ENCODE measurements at regions of chr12 and their contacts with region 1.

Region 1: DNA sequence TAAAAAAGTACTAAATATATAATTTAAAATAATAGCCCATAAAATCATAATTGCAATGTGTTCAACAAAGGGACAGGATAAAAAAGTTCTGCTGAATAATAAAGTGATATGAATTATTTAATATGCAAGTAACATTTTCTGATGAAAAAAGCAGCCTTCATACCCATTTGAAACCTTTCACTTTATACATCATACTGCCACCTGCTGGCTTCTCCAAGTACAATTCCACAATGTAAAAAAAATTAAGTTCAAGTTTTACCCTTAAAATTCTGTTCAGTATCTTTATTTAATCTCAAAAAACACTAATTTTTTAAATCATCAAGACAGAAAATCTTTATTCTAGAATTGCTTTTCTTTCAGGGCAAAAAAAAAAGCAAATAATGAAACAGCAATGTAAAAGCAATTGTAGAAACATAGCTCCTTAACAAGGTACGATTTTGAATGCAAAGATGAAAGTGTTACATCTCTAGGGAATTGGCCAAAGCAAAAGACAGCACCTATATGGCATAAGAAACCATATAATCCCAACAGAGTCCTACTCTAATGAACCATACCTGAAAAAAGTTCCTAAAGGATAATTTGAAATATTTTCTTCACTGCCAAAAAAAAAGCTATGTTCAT is 15.0 kb downstream of the MDM1 start:
- DNase-seq: peak; percentile 58
- ATAC-seq: no peak
- H3K4me3 Mint-ChIP-seq: no peak overlapping the region
- H3K27ac Mint-ChIP-seq: no peak overlapping the region
- H3K4me1 Mint-ChIP-seq: no peaks in the 10 kb centered on the region
- H3K27me3 Mint-ChIP-seq: no peaks in the 10 kb centered on the region

Region 2: GRCh38 chr12:68236421-68237059 is 80.6 kb before region 1 on chr12:
- CTCF ChIA-PET with region 1: interaction called, 18 read pairs
- DNase-seq: peak; percentile 66
- ATAC-seq: peak; percentile 70
- H3K4me3 Mint-ChIP-seq: peak overlapping the region; percentile 76
- H3K27ac Mint-ChIP-seq: peak overlapping the region; percentile 93
- H3K4me1 Mint-ChIP-seq: peaks cover 64% of the 10 kb centered on the region
- H3K27me3 Mint-ChIP-seq: no peaks in the 10 kb centered on the region

Region 3: GRCh38 chr12:68290126-68290525 is 27.0 kb before region 1 on chr12:
- CTCF ChIA-PET with region 1: interaction called, 11 read pairs
- DNase-seq: peak; percentile 73
- ATAC-seq: peak; percentile 100
- H3K4me3 Mint-ChIP-seq: no peak overlapping the region
- H3K27ac Mint-ChIP-seq: peak overlapping the region; percentile 16
- H3K4me1 Mint-ChIP-seq: peaks cover 36% of the 10 kb centered on the region
- H3K27me3 Mint-ChIP-seq: peaks cover 7% of the 10 kb centered on the region

Region 4: DNA sequence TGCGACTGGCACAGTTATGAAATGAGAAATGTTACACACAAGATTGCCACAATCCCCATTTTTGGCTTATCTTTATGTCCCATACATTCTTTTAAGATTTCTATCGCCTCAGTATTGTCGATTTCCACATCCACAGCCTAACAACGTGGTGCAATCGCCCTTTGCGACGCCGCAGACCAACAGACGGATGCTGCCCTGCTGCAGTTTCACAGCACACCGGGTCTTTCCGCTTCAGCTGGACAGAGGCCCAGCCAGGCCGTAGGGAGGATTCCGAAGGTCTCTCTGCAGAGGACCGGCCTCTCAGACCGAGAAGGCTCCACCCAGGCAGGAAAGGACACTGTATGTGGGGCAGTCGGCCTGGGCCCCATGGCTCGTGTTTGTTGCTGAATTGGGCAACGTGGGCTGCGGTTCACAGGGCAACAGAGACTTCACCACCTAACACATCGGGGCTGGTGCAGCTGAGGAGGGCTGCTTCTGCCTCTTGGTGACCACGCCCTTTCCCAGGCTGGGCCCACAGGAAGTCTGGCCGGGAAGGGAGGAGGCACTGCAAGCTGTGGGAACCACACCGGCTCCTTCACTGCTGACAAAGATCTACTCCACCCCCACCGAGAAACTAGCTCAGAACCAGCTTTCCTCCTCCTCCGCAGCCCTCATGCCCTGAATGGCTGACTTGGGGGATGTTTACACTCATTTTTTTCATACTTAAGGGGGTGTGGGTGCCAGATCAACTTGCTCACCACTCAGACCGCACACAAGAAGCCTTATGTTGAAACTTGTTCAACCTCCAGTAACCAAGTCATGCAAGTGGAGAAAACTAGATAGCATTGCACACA is 48.0 kb after region 1 on chr12:
- CTCF ChIA-PET with region 1: no interaction called
- DNase-seq: peak; percentile 98
- ATAC-seq: peak; percentile 95
- H3K4me3 Mint-ChIP-seq: peak overlapping the region; percentile 75
- H3K27ac Mint-ChIP-seq: peak overlapping the region; percentile 94
- H3K4me1 Mint-ChIP-seq: peaks cover 60% of the 10 kb centered on the region
- H3K27me3 Mint-ChIP-seq: no peaks in the 10 kb centered on the region